Natural killer cell (primary cell): ENCODE measurements at regions of chr3 and their contacts with region 1.

Region 1: GRCh38 chr3:45688882-45689756 is at the start of gene SACM1L:
- DNase-seq: peak; percentile 97 to 99
- ATAC-seq: peak; percentile 84 to 94 (median 87)
- H3K4me3 ChIP-seq: peak within 1 kb of the TSS; percentile 63
- H3K4me3 Mint-ChIP-seq: peak within 1 kb of the TSS; percentile 99
- H3K27ac ChIP-seq: peak within 1 kb of the TSS; percentile 79
- H3K27ac Mint-ChIP-seq: peak within 1 kb of the TSS; percentile 97 to 100
- H3K4me1 ChIP-seq: peaks cover 36% of the 10 kb centered on the region
- H3K4me1 Mint-ChIP-seq: peaks cover 55 to 56% of the 10 kb centered on the region in 2 donors
- H3K27me3 ChIP-seq: no peaks in the 10 kb centered on the region
- H3K27me3 Mint-ChIP-seq: peaks cover 4 to 7% of the 10 kb centered on the region in 2 donors
- CTCF ChIP-seq: no peak
- total RNA-seq, gene SACM1L: 93.2 to 110 (median 93.9) TPM

Region 2: GRCh38 chr3:45665101-45665572 is 24.0 kb before region 1 on chr3:
- intact Hi-C with region 1: loop called (anchors 2 kb)
- DNase-seq: peak; percentile 35 to 90
- ATAC-seq: peak; percentile 28 to 34 (median 30)
- H3K4me3 ChIP-seq: peak overlapping the region; percentile 40
- H3K4me3 Mint-ChIP-seq: peak overlapping the region; percentile 84
- H3K27ac ChIP-seq: peak overlapping the region; percentile 61
- H3K27ac Mint-ChIP-seq: peak overlapping the region; percentile 92 to 95
- H3K4me1 ChIP-seq: peaks cover 19% of the 10 kb centered on the region
- H3K4me1 Mint-ChIP-seq: peaks cover 19 to 26% of the 10 kb centered on the region in 2 donors
- H3K27me3 ChIP-seq: no peaks in the 10 kb centered on the region
- H3K27me3 Mint-ChIP-seq: no peaks in the 10 kb centered on the region
- CTCF ChIP-seq: peak; percentile 64

Region 3: DNA sequence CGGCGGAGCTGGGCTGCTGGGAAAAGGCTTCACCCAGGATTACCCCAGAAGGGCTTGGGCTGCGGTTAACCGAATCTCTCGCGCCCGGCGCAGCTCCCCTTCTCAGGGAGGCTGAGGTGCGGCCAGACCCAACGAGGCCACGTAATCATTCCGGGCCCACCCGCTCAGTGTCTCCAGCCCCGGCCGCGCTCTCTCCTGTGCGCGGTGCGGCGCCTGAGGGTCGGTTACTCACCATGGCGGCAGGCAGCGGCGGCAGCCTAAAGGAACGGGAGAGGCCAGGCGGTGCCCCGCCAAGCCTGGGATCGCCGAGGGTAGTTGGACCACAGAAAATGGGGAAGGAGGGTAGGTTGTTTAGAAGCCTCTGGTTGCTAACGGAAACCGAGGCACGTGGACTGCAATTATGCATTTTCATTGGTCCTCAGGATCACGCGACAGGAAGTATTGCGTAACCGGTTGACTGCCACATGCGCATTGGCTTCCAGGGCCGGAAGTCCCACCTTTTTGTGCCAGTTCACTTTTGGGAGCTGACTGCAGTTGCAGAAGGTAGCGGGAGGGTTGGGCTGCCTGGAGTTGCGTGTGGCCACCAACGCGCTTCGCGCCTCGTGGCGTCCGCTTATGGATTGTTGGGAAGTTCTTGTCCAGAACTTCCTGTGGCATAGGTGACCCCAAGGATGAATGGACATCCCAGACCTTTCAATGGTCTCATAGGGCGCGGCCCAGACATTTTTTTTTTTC is 152.8 kb after region 1 on chr3 and contains the start of gene LZTFL1:
- intact Hi-C with region 1: loop called (anchors 10 kb)
- DNase-seq: peak; percentile 85 to 97
- ATAC-seq: peak; percentile 82 to 91 (median 86)
- H3K4me3 ChIP-seq: peak within 1 kb of the TSS; percentile 77
- H3K4me3 Mint-ChIP-seq: peak within 1 kb of the TSS; percentile 96
- H3K27ac ChIP-seq: peak within 1 kb of the TSS; percentile 81
- H3K27ac Mint-ChIP-seq: peak within 1 kb of the TSS; percentile 93 to 97
- H3K4me1 ChIP-seq: peaks cover 15% of the 10 kb centered on the region
- H3K4me1 Mint-ChIP-seq: peaks cover 22 to 38% of the 10 kb centered on the region in 2 donors
- H3K27me3 ChIP-seq: no peaks in the 10 kb centered on the region
- H3K27me3 Mint-ChIP-seq: no peaks in the 10 kb centered on the region
- CTCF ChIP-seq: peak; percentile 5
- total RNA-seq, gene LZTFL1: 16.4 to 19.8 (median 17.2) TPM